ENCODE measurements at regions of chr1 and their contacts with region 1.

Region 1: DNA sequence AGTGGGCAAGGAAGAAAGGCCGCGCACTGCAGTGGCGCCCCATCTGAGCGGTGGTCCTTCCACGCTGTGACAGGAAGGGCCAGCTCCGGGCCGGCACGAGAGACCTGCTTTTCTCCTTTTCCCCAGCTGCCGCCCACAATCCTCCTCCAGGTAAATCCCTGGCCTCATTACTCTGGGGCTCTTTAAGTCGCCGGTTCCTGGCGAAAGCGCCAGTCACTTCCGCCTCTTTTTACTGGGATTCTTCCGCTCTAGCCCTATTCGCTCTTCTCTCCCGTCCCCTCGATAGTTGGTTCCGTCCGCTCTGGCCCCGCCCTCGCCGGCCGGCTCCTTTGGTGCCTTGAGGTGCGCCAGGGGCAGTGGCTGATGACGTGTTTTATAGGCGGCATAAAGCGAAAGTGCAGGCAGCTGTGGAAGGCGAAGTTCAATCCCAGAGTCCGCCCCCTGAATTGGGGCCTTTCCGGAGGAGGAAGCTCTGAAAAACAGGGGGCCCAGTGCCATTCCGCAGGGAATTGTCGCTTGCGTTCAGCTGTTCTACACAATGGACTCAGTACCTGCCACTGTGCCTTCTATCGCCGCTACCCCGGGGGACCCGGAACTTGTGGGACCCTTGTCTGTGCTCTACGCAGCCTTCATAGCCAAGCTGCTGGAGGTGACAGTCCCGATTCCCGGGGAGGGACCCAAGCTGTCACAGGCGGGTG is 26.2 kb downstream of the MIA3 start:
- DNase-seq: peak; percentile 98
- H3K4me3 ChIP-seq: peak overlapping the region; percentile 92 to 95
- H3K27ac ChIP-seq: peak overlapping the region; percentile 92
- H3K4me1 ChIP-seq: peaks cover 21% of the 10 kb centered on the region
- H3K27me3 ChIP-seq: no peaks in the 10 kb centered on the region
- CTCF ChIP-seq: peak in 1 of 3 experiments; percentile 3
- POLR2A ChIP-seq: peak in 1 of 2 donors; percentile 31

Region 2: GRCh38 chr1:221620437-221621384 is 1023.4 kb before region 1 on chr1:
- intact Hi-C with region 1: no loop called
- DNase-seq: no peak
- H3K4me3 ChIP-seq: no peak overlapping the region
- H3K27ac ChIP-seq: no peak overlapping the region
- H3K4me1 ChIP-seq: no peaks in the 10 kb centered on the region
- H3K27me3 ChIP-seq: no peaks in the 10 kb centered on the region
- CTCF ChIP-seq: no peak
- POLR2A ChIP-seq: no peak

Region 3: GRCh38 chr1:222455188-222455879 is 188.8 kb before region 1 on chr1:
- intact Hi-C with region 1: no loop called
- DNase-seq: no peak
- H3K4me3 ChIP-seq: peak overlapping the region; percentile 7 to 17
- H3K27ac ChIP-seq: peak overlapping the region; percentile 39
- H3K4me1 ChIP-seq: peaks cover 13% of the 10 kb centered on the region
- H3K27me3 ChIP-seq: no peaks in the 10 kb centered on the region
- CTCF ChIP-seq: peak; percentile 32 to 86 (median 75)
- POLR2A ChIP-seq: no peak

Region 4: GRCh38 chr1:222713091-222713961 is 69.2 kb after region 1 on chr1:
- intact Hi-C with region 1: loop called (anchors 1 kb)
- DNase-seq: peak in 1 of 2 donors; percentile 97
- H3K4me3 ChIP-seq: peak overlapping the region; percentile 68 to 69
- H3K27ac ChIP-seq: peak overlapping the region; percentile 98
- H3K4me1 ChIP-seq: peaks cover 60% of the 10 kb centered on the region
- H3K27me3 ChIP-seq: no peaks in the 10 kb centered on the region
- CTCF ChIP-seq: no peak
- POLR2A ChIP-seq: peak in 1 of 2 donors; percentile 39

Region 5: DNA sequence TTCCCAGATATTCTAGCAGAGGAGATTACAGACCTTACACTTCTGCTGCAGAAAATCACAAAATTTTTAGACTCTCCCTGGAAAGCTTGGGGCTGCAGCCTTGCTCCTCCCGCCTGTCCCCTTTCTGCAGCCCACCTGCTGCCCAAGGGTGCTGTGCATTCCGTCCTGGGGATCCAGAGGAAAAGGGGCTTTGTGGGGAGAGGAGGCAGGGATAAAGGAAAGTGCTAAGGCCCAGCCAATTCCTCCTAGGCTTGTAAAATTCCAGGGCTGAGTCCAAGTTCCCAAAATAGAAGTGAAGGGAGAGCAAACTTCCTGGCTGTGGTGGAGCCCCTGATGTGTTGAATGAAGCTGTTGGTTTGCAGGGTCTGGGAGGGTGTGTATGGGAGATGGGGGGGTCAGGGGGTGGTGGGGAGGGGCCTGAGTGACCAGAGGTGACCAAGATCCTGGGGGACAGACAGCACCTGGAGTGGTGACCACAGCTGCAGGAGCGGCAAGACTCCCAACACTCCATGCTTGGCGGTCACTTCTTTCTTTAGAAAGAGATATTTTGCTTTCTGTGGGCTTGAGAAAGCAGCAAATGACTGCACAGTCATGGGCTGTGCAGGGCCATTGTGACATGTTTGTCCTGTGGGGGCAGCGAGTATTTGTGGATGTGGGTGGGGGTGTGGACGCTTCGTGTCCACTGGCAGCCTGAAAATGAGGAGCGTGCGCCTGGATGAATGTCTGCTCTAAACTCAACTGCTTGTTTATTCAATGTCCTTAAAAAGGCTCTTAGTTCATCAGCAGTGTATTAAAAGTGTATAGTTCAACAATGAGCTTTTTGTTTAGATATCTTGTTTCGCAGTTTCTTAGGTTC is 430.6 kb after region 1 on chr1:
- intact Hi-C with region 1: loop called (anchors 10 kb)
- DNase-seq: no peak
- H3K4me3 ChIP-seq: peak overlapping the region in 1 of 2 donors; percentile 28
- H3K27ac ChIP-seq: peak overlapping the region; percentile 45
- H3K4me1 ChIP-seq: peaks cover 13% of the 10 kb centered on the region
- H3K27me3 ChIP-seq: no peaks in the 10 kb centered on the region
- CTCF ChIP-seq: no peak
- POLR2A ChIP-seq: no peak

Measured in vagina (tissue), 2 donors.